Activated B cell treated with CpG ODN at 0.5 μM for 24 hours (primary cell): ENCODE measurements at regions of chr1 and their contacts with region 1.

Region 1: DNA sequence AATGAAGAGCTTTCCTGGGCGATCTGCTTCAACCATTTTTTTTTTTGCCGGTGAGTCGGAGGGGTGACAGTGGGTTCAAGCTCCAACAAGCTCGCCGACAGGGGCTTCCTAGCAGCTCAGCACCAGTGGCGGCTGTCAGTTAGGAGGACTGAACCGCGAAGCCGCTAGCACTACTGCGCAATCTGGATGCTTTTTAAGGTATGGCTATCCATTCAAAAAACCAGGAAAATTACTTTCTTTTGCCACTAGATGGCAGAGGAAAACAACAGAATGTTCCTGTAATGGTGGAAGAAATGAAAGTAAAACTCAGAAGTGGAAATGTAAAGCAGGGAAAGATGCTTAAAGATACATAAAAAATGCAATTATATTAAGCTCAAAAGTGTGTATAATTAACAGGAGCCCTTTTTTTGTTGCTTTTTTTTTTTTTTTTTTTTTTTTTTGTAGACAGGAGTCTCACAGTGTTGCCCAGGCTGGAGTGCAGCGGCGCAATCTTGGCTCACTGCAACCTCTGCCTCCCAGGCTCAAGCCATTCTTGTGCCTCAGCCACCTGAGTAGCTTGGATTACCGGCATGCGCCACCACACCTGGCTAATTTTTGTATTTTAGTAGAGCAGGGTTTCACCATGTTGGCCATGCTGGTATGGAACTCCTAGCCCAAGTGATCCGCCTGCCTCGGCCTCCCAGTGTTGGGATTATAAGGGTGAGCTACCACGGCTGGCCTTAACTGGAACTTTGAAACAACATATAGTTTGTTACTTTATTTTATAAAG is 8.5 kb downstream of the KYAT3 start:
- DNase-seq: no peak
- ATAC-seq: peak; percentile 84
- H3K4me3 Mint-ChIP-seq: peak overlapping the region; percentile 29
- H3K27ac Mint-ChIP-seq: peak overlapping the region; percentile 56
- H3K4me1 Mint-ChIP-seq: peaks cover 62% of the 10 kb centered on the region
- H3K27me3 Mint-ChIP-seq: no peaks in the 10 kb centered on the region
- CTCF ChIP-seq: no peak

Region 2: GRCh38 chr1:88946861-88947260 is 37.1 kb before region 1 on chr1:
- CTCF ChIA-PET with region 1: no interaction called
- POLR2A ChIA-PET with region 1: no interaction called
- intact Hi-C with region 1: no loop called
- DNase-seq: no peak
- ATAC-seq: no peak
- H3K4me3 Mint-ChIP-seq: no peak overlapping the region
- H3K27ac Mint-ChIP-seq: no peak overlapping the region
- H3K4me1 Mint-ChIP-seq: no peaks in the 10 kb centered on the region
- H3K27me3 Mint-ChIP-seq: no peaks in the 10 kb centered on the region
- CTCF ChIP-seq: no peak

Region 3: GRCh38 chr1:88973520-88974137 is 10.3 kb before region 1 on chr1:
- CTCF ChIA-PET with region 1: interaction called, 26 read pairs
- POLR2A ChIA-PET with region 1: no interaction called
- intact Hi-C with region 1: no loop called
- DNase-seq: no peak
- ATAC-seq: no peak
- H3K4me3 Mint-ChIP-seq: no peak overlapping the region
- H3K27ac Mint-ChIP-seq: no peak overlapping the region
- H3K4me1 Mint-ChIP-seq: peaks cover 20% of the 10 kb centered on the region
- H3K27me3 Mint-ChIP-seq: no peaks in the 10 kb centered on the region
- CTCF ChIP-seq: peak; percentile 77